Esophagus muscularis mucosa (tissue), 4 donors: ENCODE measurements at regions of chr4 and their contacts with region 1.

Region 1: GRCh38 chr4:151099229-151099975 is at the start of gene RPS3A:
- DNase-seq: peak; percentile 98
- H3K4me3 ChIP-seq: peak within 1 kb of the TSS; percentile 72 to 90 (median 77)
- H3K27ac ChIP-seq: peak within 1 kb of the TSS; percentile 89 to 92 (median 91)
- H3K4me1 ChIP-seq: peaks cover 21 to 45% (median 34%) of the 10 kb centered on the region in 4 donors
- H3K27me3 ChIP-seq: no peaks in the 10 kb centered on the region
- CTCF ChIP-seq: peak; percentile 81 to 95 (median 91)
- EP300 ChIP-seq: no peak
- POLR2A ChIP-seq: no peak
- total RNA-seq, gene RPS3A: 1,272 to 4,454 (median 2,978) TPM

Region 2: DNA sequence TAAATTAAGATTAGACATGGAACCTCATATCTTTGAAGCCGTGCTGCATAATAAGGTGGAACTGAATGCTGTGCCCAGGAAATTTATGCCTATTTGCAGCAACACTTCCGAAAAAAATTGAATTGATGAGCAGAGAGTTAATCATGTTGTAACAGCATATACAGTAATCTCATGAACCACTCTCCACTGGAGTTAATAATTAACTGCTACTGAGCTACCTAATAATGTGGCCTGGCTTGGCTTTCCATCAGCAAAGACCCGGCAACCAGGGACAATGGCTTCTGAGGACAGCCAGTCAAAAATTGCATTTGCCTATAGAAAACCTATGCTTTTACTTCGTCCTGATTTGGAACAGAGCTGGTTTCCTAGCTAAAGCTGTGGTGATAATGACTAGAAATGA is 725.3 kb after region 1 on chr4:
- intact Hi-C with region 1: no loop called
- DNase-seq: no peak
- H3K4me3 ChIP-seq: no peak overlapping the region
- H3K27ac ChIP-seq: no peak overlapping the region
- H3K4me1 ChIP-seq: no peaks in the 10 kb centered on the region
- H3K27me3 ChIP-seq: no peaks in the 10 kb centered on the region
- CTCF ChIP-seq: no peak
- EP300 ChIP-seq: no peak
- POLR2A ChIP-seq: no peak

Region 3: GRCh38 chr4:152535903-152536544 is 1436.6 kb after region 1 on chr4 and contains the start of gene FBXW7:
- intact Hi-C with region 1: loop called (anchors 10 kb)
- DNase-seq: peak; percentile 100
- H3K4me3 ChIP-seq: peak within 1 kb of the TSS; percentile 97 to 99 (median 98)
- H3K27ac ChIP-seq: peak within 1 kb of the TSS; percentile 92 to 97 (median 97)
- H3K4me1 ChIP-seq: peaks cover 50 to 65% (median 55%) of the 10 kb centered on the region in 4 donors
- H3K27me3 ChIP-seq: no peaks in the 10 kb centered on the region
- CTCF ChIP-seq: no peak
- EP300 ChIP-seq: no peak
- POLR2A ChIP-seq: peak; percentile 61
- total RNA-seq, gene FBXW7: 63.1 to 97.6 (median 70.7) TPM

Region 4: GRCh38 chr4:152779513-152780266 is 1680.3 kb after region 1 on chr4 and contains the starts of genes ARFIP1 and TIGD4:
- intact Hi-C with region 1: loop called (anchors 10 kb)
- DNase-seq: peak; percentile 99
- H3K4me3 ChIP-seq: peak within 1 kb of the TSS; percentile 56 to 84 (median 81)
- H3K27ac ChIP-seq: peak within 1 kb of the TSS; percentile 91 to 92 (median 92)
- H3K4me1 ChIP-seq: peaks cover 28 to 42% (median 35%) of the 10 kb centered on the region in 4 donors
- H3K27me3 ChIP-seq: no peaks in the 10 kb centered on the region
- CTCF ChIP-seq: peak in 2 of 3 experiments; percentile 26 to 30
- EP300 ChIP-seq: no peak
- POLR2A ChIP-seq: no peak
- total RNA-seq, gene ARFIP1: 26.3 to 36.1 (median 30.6) TPM
- total RNA-seq, gene TIGD4: 0.17 to 0.52 (median 0.37) TPM